ENCODE measurements at regions of chr1 and their contacts with region 1.

Region 1: DNA sequence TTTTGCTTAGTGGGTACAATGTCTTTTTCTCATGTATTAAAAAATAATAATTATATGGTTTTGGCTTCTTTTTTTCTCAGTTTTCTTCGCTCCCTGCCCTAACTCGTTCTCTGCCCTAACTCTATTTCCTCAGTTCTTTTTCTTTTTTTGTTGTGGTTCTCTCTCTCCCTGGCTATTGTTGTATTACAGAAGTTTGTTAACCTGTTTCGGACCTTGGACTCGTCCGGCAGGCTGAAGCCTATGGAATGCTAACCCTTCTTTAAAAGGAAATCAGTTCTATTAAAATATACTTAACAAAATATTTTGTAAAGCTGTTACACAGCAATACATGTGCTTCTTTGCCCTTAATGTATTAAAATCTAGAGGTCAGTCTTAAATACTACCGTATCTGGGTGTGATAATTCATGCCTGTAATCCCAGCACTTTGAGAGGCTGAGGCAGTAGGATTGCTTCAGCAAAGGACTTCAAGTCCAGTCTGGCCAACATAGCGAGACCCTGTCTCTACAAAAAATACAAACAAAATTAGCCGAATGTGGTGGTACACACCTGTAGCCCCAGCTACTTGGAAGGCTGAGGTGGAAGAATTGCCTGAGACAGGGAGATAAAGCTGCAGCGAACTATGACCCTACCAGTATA is 64.1 kb downstream of the ANGPTL1 start:
- DNase-seq: no peak
- ATAC-seq: no peak
- H3K4me3 Mint-ChIP-seq: no peak overlapping the region
- H3K27ac Mint-ChIP-seq: peak overlapping the region; percentile 68
- H3K4me1 Mint-ChIP-seq: peaks cover 40% of the 10 kb centered on the region
- H3K27me3 Mint-ChIP-seq: no peaks in the 10 kb centered on the region
- CTCF ChIP-seq: no peak

Region 2: GRCh38 chr1:178379807-178380206 is 427.0 kb before region 1 on chr1:
- CTCF ChIA-PET with region 1: no interaction called
- POLR2A ChIA-PET with region 1: no interaction called
- intact Hi-C with region 1: no loop called
- DNase-seq: no peak
- ATAC-seq: no peak
- H3K4me3 Mint-ChIP-seq: no peak overlapping the region
- H3K27ac Mint-ChIP-seq: no peak overlapping the region
- H3K4me1 Mint-ChIP-seq: no peaks in the 10 kb centered on the region
- H3K27me3 Mint-ChIP-seq: no peaks in the 10 kb centered on the region
- CTCF ChIP-seq: no peak

Region 3: GRCh38 chr1:178796013-178796412 is 10.8 kb before region 1 on chr1:
- CTCF ChIA-PET with region 1: no interaction called
- POLR2A ChIA-PET with region 1: interaction called, 4 read pairs
- intact Hi-C with region 1: loop called (anchors 1 kb)
- DNase-seq: no peak
- ATAC-seq: peak; percentile 77
- H3K4me3 Mint-ChIP-seq: peak overlapping the region; percentile 59
- H3K27ac Mint-ChIP-seq: peak overlapping the region; percentile 85
- H3K4me1 Mint-ChIP-seq: peaks cover 62% of the 10 kb centered on the region
- H3K27me3 Mint-ChIP-seq: no peaks in the 10 kb centered on the region
- CTCF ChIP-seq: no peak

Region 4: GRCh38 chr1:178821134-178821866 is 14.5 kb after region 1 on chr1:
- CTCF ChIA-PET with region 1: no interaction called
- POLR2A ChIA-PET with region 1: interaction called, 5 read pairs
- intact Hi-C with region 1: loop called (anchors 2 kb)
- DNase-seq: no peak
- ATAC-seq: peak; percentile 28
- H3K4me3 Mint-ChIP-seq: no peak overlapping the region
- H3K27ac Mint-ChIP-seq: peak overlapping the region; percentile 62
- H3K4me1 Mint-ChIP-seq: peaks cover 41% of the 10 kb centered on the region
- H3K27me3 Mint-ChIP-seq: no peaks in the 10 kb centered on the region
- CTCF ChIP-seq: no peak

Region 5: GRCh38 chr1:178847396-178847849 is 40.6 kb after region 1 on chr1:
- CTCF ChIA-PET with region 1: no interaction called
- POLR2A ChIA-PET with region 1: no interaction called
- intact Hi-C with region 1: loop called (anchors 5 kb)
- DNase-seq: no peak
- ATAC-seq: no peak
- H3K4me3 Mint-ChIP-seq: no peak overlapping the region
- H3K27ac Mint-ChIP-seq: peak overlapping the region; percentile 24
- H3K4me1 Mint-ChIP-seq: no peaks in the 10 kb centered on the region
- H3K27me3 Mint-ChIP-seq: no peaks in the 10 kb centered on the region
- CTCF ChIP-seq: no peak